PC-9 (cell line): ENCODE measurements at regions of chr4 and their contacts with region 1.

Region 1: DNA sequence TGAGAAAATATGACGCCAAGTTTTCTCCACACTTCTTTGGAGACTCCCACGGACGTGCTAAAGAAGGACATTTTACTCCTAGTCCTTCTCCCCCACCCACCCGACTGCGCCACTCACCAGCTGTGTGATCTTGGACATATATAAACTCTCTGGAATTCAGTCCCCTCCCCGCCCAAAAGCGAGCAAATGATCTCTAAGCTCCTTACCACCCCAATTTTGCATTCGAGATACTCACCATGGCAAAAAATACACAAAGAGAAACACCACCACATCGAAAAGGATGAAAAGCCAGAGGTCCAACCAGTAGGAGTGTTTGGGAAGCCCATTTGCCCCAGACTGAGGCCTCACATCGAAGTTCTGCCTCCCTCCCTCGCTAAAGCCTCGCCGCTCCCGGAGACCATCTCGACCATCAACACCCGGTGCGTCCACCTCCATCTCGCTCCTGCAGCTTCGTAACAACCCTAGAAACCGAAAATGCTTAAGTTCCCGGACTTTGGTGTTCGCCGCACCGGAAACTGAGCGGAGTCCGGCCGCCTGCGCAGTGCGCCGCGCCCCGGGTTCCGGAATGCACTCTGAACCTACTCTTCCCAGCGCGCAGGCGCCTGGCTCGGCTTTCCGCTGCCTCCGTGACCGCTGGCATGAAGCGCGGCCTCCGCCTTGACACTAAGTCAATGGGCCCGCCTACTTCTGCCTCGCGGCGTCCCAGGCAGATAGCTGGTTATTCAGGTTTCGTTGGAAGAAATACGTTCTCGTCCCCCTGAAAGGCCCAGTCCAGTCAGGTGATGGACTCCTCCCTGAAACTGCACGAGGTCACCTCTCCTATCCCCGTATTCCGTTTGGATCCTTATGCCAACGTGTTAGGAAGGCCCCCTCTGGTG is 21.6 kb downstream of the FABP2 start:
- DNase-seq: peak; percentile 93 to 94
- H3K4me3 ChIP-seq: peak overlapping the region; percentile 81
- H3K27ac ChIP-seq: peak overlapping the region; percentile 89
- H3K4me1 ChIP-seq: peaks cover 21% of the 10 kb centered on the region
- H3K27me3 ChIP-seq: no peaks in the 10 kb centered on the region
- CTCF ChIP-seq: no peak

Region 2: GRCh38 chr4:118360106-118360505 is 940.2 kb before region 1 on chr4:
- CTCF ChIA-PET with region 1: no interaction called
- POLR2A ChIA-PET with region 1: interaction called, 25 read pairs
- intact Hi-C with region 1: no loop called
- DNase-seq: no peak
- H3K4me3 ChIP-seq: no peak overlapping the region
- H3K27ac ChIP-seq: no peak overlapping the region
- H3K4me1 ChIP-seq: no peaks in the 10 kb centered on the region
- H3K27me3 ChIP-seq: no peaks in the 10 kb centered on the region
- CTCF ChIP-seq: no peak

Region 3: DNA sequence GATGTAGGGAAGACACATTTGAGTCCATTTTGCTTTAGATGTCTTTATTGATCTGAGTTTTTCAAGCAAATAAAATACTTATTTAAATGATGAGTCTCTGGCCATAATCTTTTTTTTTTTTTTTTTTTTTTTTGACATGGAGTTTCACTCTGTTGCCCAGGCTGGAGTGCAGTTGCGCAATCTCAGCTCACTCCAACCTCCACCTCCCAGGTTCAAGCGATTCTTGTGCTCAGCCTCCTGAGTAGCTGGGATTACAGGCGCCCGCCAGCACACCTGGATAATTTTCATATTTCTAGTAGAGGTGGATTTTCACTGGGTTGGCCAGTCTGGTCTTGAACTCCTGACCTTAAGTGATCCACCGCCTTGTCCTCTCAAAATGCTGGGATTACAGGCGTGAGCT is 960.8 kb after region 1 on chr4:
- CTCF ChIA-PET with region 1: interaction called, 10 read pairs
- POLR2A ChIA-PET with region 1: no interaction called
- intact Hi-C with region 1: no loop called
- DNase-seq: no peak
- H3K4me3 ChIP-seq: no peak overlapping the region
- H3K27ac ChIP-seq: no peak overlapping the region
- H3K4me1 ChIP-seq: no peaks in the 10 kb centered on the region
- H3K27me3 ChIP-seq: no peaks in the 10 kb centered on the region
- CTCF ChIP-seq: no peak